Endothelial cell of umbilical vein (primary cell): ENCODE measurements at regions of chr22 and their contacts with region 1.

Region 1: GRCh38 chr22:49632199-49633009 is 195.3 kb downstream of the BRD1 start:
- DNase-seq: peak; percentile 76
- H3K4me3 ChIP-seq: peak overlapping the region in 2 of 3 experiments; percentile 3 to 46
- H3K27ac ChIP-seq: no peak overlapping the region
- H3K4me1 ChIP-seq: peaks cover 5% of the 10 kb centered on the region
- H3K27me3 ChIP-seq: no peaks in the 10 kb centered on the region
- CTCF ChIP-seq: peak; percentile 88 to 91
- POLR2A ChIP-seq: no peak

Region 2: DNA sequence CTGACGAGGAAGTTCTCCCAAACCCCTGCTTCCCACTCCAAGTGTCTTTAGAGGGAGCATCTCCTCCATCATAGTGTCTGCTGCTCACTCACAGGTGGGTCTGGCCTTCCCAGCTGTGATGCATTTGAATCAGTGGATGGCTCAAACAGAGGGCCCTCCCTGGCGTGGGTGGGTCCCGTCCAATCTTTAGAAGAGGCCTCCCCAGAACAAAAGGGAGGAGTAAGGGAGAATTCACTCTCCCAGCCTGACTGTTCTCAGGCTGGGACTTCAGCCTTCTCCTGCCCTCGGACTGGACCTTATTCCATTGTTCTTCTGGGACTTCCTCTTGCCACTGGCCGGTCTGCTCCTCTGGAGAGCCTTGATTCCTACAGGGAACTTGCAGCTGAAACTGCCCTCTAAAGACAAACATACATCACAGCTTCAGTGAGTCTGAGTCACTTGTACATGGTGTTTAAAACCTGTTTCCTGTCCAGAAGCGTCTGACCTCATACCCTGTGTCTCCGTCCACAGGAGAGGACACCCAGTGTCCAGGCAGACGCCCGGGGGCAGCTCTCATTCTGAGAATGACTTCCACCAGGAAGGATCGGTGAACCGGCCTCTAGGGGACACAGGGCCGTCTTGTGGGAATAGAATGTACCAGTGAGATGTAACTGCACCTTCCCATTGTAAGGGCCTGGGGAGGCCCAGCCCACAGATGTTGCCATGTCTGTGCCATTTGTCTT is 39.5 kb before region 1 on chr22:
- CTCF ChIA-PET with region 1: no interaction called
- POLR2A ChIA-PET with region 1: no interaction called
- dilution Hi-C with region 1: no loop called
- intact Hi-C with region 1: loop called (anchors 2 kb)
- DNase-seq: peak; percentile 57
- H3K4me3 ChIP-seq: no peak overlapping the region
- H3K27ac ChIP-seq: no peak overlapping the region
- H3K4me1 ChIP-seq: no peaks in the 10 kb centered on the region
- H3K27me3 ChIP-seq: no peaks in the 10 kb centered on the region
- CTCF ChIP-seq: no peak
- POLR2A ChIP-seq: no peak

Region 3: DNA sequence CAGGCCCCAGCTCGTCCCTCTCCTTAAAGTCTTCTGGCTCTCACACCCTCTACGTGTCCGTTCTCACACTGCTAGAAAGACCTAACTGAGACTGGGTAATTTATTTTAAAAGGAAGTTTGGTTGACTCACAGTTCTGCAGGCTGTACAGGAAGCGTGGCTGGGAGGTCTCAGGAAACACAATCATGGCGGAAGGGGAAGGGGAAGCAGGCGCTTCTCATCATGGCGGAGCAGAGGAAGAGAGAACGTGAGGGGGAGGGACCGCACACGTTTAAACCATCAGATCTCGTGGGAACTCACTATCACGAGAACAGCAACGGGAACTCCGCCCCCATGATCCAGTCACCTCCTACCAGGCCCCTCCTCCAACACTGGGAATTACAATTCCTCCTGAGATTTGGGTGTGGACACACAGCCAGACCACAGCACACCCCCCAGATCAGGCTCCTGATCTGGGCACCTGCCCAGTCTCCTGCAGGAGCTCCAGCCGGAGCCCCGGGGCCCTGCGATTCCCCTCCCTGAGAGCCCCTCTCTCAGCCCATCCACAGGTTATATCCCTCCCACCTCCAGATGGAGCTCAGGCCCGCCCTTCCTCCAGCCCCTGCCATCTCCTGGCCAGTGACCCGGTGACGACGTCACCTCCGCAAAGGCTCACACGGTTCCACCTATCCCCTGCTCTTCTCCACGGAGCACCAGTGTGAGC is 25.0 kb after region 1 on chr22:
- CTCF ChIA-PET with region 1: interaction called, 28 read pairs
- POLR2A ChIA-PET with region 1: interaction called, 3 read pairs
- dilution Hi-C with region 1: no loop called
- intact Hi-C with region 1: no loop called
- DNase-seq: peak; percentile 96
- H3K4me3 ChIP-seq: peak overlapping the region; percentile 49 to 60 (median 51)
- H3K27ac ChIP-seq: peak overlapping the region; percentile 72
- H3K4me1 ChIP-seq: peaks cover 30% of the 10 kb centered on the region
- H3K27me3 ChIP-seq: no peaks in the 10 kb centered on the region
- CTCF ChIP-seq: no peak
- POLR2A ChIP-seq: peak; percentile 72

Region 4: DNA sequence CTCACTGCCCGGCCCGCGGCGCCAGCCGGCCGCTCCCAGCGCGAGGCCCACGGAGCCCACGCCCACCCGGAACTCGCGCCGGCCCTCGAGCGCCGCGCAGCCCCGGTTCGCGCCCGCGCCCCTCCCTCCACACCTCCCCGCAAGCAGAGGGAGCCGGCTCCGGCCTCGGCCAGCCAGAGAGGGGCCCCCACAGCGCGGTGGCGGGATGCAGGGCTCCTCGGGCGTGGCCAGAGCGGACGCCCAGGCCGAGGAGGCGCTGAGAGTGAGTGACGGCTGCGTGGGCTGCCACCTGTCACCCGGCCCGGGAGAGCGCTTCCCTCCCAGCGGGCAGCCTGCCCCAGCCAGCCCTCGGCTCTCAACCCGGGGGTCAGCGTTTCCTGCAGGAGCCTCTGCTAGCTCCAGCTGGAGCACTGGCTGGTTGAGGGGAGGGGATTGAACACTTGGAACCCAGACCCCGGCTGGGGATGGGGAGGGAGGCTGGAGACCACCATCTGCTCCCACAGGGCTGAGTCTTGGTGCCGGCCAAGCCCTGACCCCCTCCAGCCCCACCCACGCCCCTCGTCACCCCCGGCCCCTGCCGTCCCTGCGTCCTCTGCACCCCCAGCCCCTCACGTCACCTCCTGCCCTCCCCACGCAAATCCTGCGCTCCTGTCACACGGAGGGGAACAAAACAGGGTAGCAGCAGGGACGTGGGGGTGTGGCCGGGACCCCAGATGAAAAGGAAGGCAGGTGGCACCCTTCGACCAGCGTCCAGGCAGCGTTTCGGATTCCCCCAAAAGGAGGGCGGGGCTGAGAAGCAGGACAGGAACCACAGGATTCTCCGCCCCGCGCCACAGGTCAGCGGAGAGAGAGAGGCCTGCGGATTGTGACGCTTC is 38.3 kb after region 1 on chr22:
- CTCF ChIA-PET with region 1: interaction called, 5 read pairs
- POLR2A ChIA-PET with region 1: no interaction called
- dilution Hi-C with region 1: no loop called
- intact Hi-C with region 1: loop called (anchors 2 kb)
- DNase-seq: no peak
- H3K4me3 ChIP-seq: peak overlapping the region in 2 of 3 experiments; percentile 23 to 39
- H3K27ac ChIP-seq: no peak overlapping the region
- H3K4me1 ChIP-seq: peaks cover 15% of the 10 kb centered on the region
- H3K27me3 ChIP-seq: peaks cover 15 to 20% of the 10 kb centered on the region in 2 experiments
- CTCF ChIP-seq: no peak
- POLR2A ChIP-seq: no peak

Region 5: GRCh38 chr22:49701380-49702067 is 69.1 kb after region 1 on chr22:
- CTCF ChIA-PET with region 1: interaction called, 19 read pairs
- POLR2A ChIA-PET with region 1: no interaction called
- dilution Hi-C with region 1: no loop called
- intact Hi-C with region 1: no loop called
- DNase-seq: no peak
- H3K4me3 ChIP-seq: no peak overlapping the region
- H3K27ac ChIP-seq: no peak overlapping the region
- H3K4me1 ChIP-seq: no peaks in the 10 kb centered on the region
- H3K27me3 ChIP-seq: no peaks in the 10 kb centered on the region
- CTCF ChIP-seq: peak in 1 of 2 donors; percentile 43
- POLR2A ChIP-seq: no peak